ENCODE measurements at regions of chr3 and their contacts with region 1.

Region 1: GRCh38 chr3:8987645-8988383 is 24.5 kb upstream of the RAD18 start:
- ATAC-seq: peak; percentile 80 to 89 (median 85)
- H3K4me3 ChIP-seq: no peak overlapping the region
- H3K27ac ChIP-seq: no peak overlapping the region
- H3K4me1 ChIP-seq: peaks cover 7 to 9% of the 10 kb centered on the region in 2 donors

Region 2: DNA sequence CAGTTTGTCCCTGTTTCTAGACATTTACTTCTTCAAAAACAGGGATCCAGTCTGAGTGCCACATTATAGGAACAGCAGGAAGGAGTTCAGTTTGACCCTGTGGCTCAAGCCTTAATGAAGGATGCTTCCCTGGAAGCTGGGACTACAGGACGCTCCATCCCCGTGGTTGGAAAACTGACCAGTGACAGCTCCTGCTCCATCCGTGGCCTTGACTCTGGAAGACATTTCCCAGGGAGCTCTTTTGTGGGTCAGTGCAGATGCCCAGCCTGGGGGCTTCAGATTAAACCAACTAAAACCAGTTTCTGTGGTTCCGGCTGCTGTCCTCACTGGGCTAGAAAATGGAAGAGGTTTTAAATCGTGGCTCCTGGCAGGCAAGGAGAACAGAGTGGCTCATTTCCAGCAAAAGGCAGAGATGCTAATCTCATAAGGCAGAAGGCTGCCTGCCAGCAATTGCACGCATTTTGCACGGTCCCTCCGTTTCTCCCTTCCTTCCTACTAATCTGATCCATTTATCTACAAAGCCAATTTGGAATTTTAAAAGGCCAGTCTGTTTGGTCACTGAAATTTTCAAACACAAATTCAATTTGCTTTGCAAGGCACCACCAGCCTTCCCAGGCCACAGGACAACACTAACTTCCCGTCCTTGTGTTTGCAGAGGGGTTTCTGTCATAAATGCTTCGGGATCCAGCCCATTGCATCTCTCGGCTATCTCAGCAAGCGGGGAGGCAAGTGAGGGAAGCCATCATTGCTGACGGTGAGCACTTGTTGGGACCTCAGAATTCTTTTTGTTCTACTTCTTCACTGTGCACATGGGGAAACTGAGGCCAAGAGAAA is 337.0 kb before region 1 on chr3:
- in situ Hi-C with region 1: no loop called
- ATAC-seq: peak; percentile 24 to 74 (median 38)
- H3K4me3 ChIP-seq: no peak overlapping the region
- H3K27ac ChIP-seq: no peak overlapping the region
- H3K4me1 ChIP-seq: peaks cover 7 to 21% of the 10 kb centered on the region in 2 donors

Region 3: DNA sequence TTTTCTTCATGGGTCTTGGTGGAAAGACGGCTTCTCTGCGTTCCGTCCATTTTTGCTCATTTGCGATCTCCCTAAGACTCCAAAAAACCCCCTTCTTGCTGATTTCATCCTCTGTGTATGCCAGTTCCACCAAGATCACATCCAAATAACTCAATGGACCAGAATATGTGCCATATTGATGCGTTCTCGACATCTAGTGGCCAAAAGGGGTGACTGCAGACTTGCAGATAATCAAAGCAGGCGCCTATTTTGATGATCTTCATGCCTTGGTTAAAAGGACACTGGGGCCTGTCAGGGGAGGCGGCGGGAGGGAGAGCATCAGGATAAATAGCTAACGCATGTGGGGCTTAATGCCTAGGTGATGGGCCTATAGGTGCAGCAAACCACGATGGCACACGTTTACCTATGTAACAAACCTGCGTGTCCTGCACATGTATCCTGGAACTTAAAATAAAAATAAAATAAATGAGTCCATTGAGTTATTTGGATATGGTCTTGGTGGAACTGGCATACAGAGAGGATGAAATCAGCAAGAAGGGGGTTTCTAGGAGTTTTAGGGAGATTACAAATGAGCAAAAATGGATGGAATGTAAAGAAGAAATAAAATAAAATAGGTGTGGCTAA is 79.7 kb after region 1 on chr3:
- in situ Hi-C with region 1: loop called in 2 of 9 experiments (anchors 5 to 10 kb)
- ATAC-seq: peak in 6 of 8 experiments; percentile 34 to 80 (median 56)
- H3K4me3 ChIP-seq: no peak overlapping the region
- H3K27ac ChIP-seq: no peak overlapping the region
- H3K4me1 ChIP-seq: peaks cover 0 to 11% of the 10 kb centered on the region in 2 donors

Region 4: GRCh38 chr3:9280451-9281219 is 292.8 kb after region 1 on chr3:
- in situ Hi-C with region 1: loop called in 3 of 9 experiments (anchors 25 kb)
- ATAC-seq: peak in 6 of 8 experiments; percentile 67 to 80 (median 77)
- H3K4me3 ChIP-seq: peak overlapping the region in 3 of 5 donors; percentile 0 to 8 (median 5)
- H3K27ac ChIP-seq: peak overlapping the region; percentile 52 to 75
- H3K4me1 ChIP-seq: peaks cover 12 to 13% of the 10 kb centered on the region in 2 donors

Region 5: DNA sequence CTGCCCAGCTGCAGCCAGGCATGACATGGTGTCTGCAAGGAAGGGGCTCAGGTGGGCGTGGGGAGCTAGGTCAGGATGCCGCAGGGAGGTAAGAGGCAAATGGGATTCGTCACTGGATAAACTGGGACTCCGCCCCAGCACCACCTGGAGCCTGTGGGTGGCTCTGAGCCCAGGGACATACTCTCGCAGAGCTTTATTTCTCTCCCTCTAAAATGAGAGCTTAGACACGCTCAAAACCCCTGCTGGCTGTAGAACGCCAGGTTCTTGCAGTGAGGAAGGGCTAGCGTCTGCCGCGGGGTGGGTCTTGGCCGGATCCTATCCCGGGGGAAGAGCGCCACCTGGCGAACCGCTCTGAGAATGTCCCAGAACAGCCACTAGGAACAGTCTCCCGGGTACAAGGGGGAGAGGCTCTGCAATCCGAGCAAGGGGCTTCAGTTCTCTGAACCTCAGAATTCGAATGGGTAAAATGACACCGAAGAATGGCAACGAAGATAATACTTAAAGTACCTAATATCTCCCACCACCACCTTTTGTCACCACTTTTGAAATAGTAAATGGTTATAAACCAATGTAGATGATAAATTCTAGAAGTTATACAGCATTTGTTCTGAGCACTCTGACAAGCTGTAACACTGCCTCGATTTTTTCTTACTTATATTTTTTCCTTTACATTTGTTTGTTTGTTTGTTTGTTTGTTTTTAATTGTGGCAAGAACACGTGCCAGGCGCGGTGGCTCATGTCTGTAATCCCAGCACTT is 314.8 kb after region 1 on chr3:
- in situ Hi-C with region 1: loop called in 5 of 9 experiments (anchors 10 to 25 kb)
- ATAC-seq: peak; percentile 90 to 99 (median 98)
- H3K4me3 ChIP-seq: peak overlapping the region; percentile 3 to 21 (median 12)
- H3K27ac ChIP-seq: peak overlapping the region; percentile 16 to 26
- H3K4me1 ChIP-seq: peaks cover 0 to 16% of the 10 kb centered on the region in 2 donors

Measured in motor neuron (in vitro differentiated cells).